ENCODE measurements at regions of chr10 and their contacts with region 1.

Region 1: GRCh38 chr10:79068562-79069324 is at the start of gene ZMIZ1:
- DNase-seq: peak; percentile 88
- ATAC-seq: peak; percentile 7
- H3K4me3 ChIP-seq: peak within 1 kb of the TSS; percentile 93 to 98 (median 93)
- H3K27ac ChIP-seq: peak within 1 kb of the TSS; percentile 91
- H3K4me1 ChIP-seq: peaks cover 56% of the 10 kb centered on the region
- H3K27me3 ChIP-seq: no peaks in the 10 kb centered on the region; a peak in 1 of 5 replicates
- CTCF ChIP-seq: no peak
- EP300 ChIP-seq: peak in 1 of 2 experiments; percentile 63; a peak in 2 of 4 replicates
- POLR2A ChIP-seq: peak in 1 of 2 experiments; percentile 71; a peak in 2 of 4 replicates
- RAD21 ChIP-seq: peak; percentile 67
- total RNA-seq, gene ZMIZ1: 5.3 and 11.0 TPM in 2 replicates

Region 2: GRCh38 chr10:78657163-78657861 is 411.4 kb before region 1 on chr10:
- CTCF ChIA-PET with region 1: no interaction called
- POLR2A ChIA-PET with region 1: no interaction called
- in situ Hi-C with region 1: no loop called
- intact Hi-C with region 1: loop called (anchors 5 kb)
- DNase-seq: peak; percentile 79
- ATAC-seq: peak; percentile 97
- H3K4me3 ChIP-seq: peak overlapping the region; percentile 26 to 65 (median 38)
- H3K27ac ChIP-seq: peak overlapping the region; percentile 80
- H3K4me1 ChIP-seq: peaks cover 35% of the 10 kb centered on the region
- H3K27me3 ChIP-seq: no peaks in the 10 kb centered on the region
- CTCF ChIP-seq: peak; percentile 92
- EP300 ChIP-seq: no peak
- POLR2A ChIP-seq: no peak
- RAD21 ChIP-seq: peak; percentile 90

Region 3: DNA sequence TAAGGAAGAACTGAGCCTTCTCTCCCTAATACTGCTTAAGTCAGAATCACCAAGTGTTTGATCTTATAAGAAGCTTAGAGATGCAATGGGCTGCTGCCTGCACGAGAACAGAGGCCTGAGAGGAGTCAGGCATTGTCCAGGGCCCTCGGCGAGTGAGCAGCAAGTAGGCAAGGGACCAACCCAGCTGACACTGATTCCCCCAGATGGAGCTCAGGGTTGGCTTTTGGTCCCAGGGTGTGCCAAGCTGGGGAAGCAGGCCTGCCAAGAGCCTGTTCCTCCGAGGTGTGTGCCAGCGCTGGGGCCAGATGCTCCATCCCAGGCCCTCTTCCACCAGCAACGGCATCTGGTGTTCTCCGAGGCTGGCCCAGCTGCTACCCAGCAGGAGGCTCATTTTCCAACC is 222.0 kb before region 1 on chr10:
- CTCF ChIA-PET with region 1: no interaction called
- POLR2A ChIA-PET with region 1: no interaction called
- in situ Hi-C with region 1: no loop called
- intact Hi-C with region 1: no loop called
- DNase-seq: no peak
- ATAC-seq: no peak
- H3K4me3 ChIP-seq: no peak overlapping the region
- H3K27ac ChIP-seq: no peak overlapping the region
- H3K4me1 ChIP-seq: no peaks in the 10 kb centered on the region
- H3K27me3 ChIP-seq: peaks cover under 1 to 36% of the 10 kb centered on the region in 2 experiments; a peak in 4 of 5 replicates
- CTCF ChIP-seq: no peak
- EP300 ChIP-seq: no peak
- POLR2A ChIP-seq: no peak
- RAD21 ChIP-seq: no peak

Region 4: DNA sequence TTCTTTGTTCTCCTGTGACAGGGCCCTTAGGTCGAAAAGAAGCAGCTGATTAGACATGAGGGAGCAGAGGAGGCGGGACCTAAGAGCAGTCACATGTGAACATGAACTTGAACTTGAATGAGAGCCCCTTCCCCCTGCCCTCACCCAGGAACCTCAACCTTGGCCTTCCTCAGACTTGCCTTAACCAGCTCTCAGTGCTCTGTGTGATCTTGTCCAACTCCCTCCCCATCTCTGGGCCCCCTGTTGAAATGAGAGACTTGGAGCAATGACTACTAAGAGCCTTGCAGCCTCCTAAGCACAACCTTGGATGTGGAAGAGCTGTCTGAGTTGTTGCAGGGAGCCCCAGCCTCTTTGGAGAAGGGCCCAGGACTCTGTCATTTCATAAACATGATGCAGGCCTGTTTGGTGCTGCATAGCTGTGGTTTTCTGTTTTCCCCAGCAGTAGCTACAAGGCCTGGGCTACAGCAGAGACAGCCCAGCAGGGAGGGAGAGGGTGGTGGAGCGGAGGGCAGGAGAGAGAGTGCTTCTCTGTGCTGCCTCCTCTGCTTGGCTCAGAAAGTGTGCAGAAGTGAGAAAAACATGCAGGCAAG is 123.9 kb before region 1 on chr10:
- CTCF ChIA-PET with region 1: no interaction called
- POLR2A ChIA-PET with region 1: no interaction called
- in situ Hi-C with region 1: no loop called
- intact Hi-C with region 1: no loop called
- DNase-seq: no peak
- ATAC-seq: peak; percentile 52
- H3K4me3 ChIP-seq: no peak overlapping the region
- H3K27ac ChIP-seq: no peak overlapping the region
- H3K4me1 ChIP-seq: peaks cover 35% of the 10 kb centered on the region
- H3K27me3 ChIP-seq: no peaks in the 10 kb centered on the region
- CTCF ChIP-seq: no peak
- EP300 ChIP-seq: no peak
- POLR2A ChIP-seq: no peak
- RAD21 ChIP-seq: no peak

Region 5: DNA sequence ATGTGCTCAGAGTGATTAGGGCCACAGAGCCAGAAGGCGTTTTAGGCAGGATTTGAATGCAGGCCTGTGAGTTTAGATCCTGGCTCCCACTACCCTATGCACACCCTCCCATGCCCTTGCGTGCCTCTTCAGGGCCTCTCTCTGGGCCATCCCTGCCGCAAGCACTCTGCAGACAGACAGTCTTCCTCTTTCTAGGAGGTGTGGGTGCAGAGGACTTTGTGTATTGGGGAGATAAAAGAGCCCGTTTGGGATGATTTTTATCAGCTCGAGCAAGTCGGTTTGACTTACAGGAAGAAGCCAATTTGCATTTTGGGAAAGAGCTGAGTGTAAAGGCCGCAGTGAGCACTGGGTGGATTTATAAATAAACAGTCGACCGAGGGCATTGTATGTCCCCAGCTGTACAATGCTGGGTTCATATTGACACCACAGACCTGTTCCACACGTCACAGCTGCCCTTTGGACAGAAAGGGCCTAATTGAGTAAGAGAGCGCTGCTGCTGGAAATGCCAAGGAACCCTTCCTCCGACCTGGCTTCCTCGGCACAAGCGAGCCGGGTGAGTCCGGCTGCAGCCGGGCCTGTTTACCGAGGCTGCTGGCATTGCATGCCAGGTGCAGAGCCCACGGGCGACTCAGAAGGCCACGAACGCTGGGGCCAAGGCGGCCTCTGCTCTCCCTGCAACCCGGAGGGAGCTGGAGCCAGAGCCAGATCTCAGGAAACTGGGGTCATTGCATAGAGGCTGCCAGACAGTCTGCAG is 25.1 kb after region 1 on chr10:
- CTCF ChIA-PET with region 1: no interaction called
- POLR2A ChIA-PET with region 1: interaction called, 8 read pairs
- in situ Hi-C with region 1: no loop called
- intact Hi-C with region 1: loop called (anchors 2 kb)
- DNase-seq: peak; percentile 97
- ATAC-seq: peak; percentile 95
- H3K4me3 ChIP-seq: peak overlapping the region; percentile 11 to 60 (median 23); a peak in 4 of 6 replicates
- H3K27ac ChIP-seq: peak overlapping the region; percentile 91
- H3K4me1 ChIP-seq: peaks cover 94% of the 10 kb centered on the region
- H3K27me3 ChIP-seq: no peaks in the 10 kb centered on the region
- CTCF ChIP-seq: no peak
- EP300 ChIP-seq: peak; percentile 71 to 82; a peak in 3 of 4 replicates
- POLR2A ChIP-seq: peak in 1 of 2 experiments; percentile 46; a peak in 2 of 4 replicates
- RAD21 ChIP-seq: no peak; the same call in 1 of the 2 replicates

Region 6: GRCh38 chr10:79127151-79127961 is 58.6 kb after region 1 on chr10:
- CTCF ChIA-PET with region 1: no interaction called
- POLR2A ChIA-PET with region 1: no interaction called
- in situ Hi-C with region 1: no loop called
- intact Hi-C with region 1: loop called (anchors 2 kb)
- DNase-seq: peak; percentile 92
- ATAC-seq: peak; percentile 95
- H3K4me3 ChIP-seq: no peak overlapping the region
- H3K27ac ChIP-seq: peak overlapping the region; percentile 51
- H3K4me1 ChIP-seq: peaks cover 73% of the 10 kb centered on the region
- H3K27me3 ChIP-seq: no peaks in the 10 kb centered on the region
- CTCF ChIP-seq: peak; percentile 63
- EP300 ChIP-seq: peak in 1 of 2 experiments; percentile 71; a peak in 2 of 4 replicates
- POLR2A ChIP-seq: no peak
- RAD21 ChIP-seq: peak; percentile 72

Region 7: GRCh38 chr10:79184145-79184625 is 115.4 kb after region 1 on chr10:
- CTCF ChIA-PET with region 1: no interaction called
- POLR2A ChIA-PET with region 1: interaction called, 4 read pairs
- in situ Hi-C with region 1: no loop called
- intact Hi-C with region 1: loop called (anchors 2 kb)
- DNase-seq: peak; percentile 77
- ATAC-seq: peak; percentile 44
- H3K4me3 ChIP-seq: peak overlapping the region in 1 of 3 experiments; percentile 50; a peak in 2 of 6 replicates
- H3K27ac ChIP-seq: peak overlapping the region; percentile 93
- H3K4me1 ChIP-seq: peaks cover 100% of the 10 kb centered on the region
- H3K27me3 ChIP-seq: no peaks in the 10 kb centered on the region
- CTCF ChIP-seq: no peak
- EP300 ChIP-seq: peak; percentile 28 to 78; a peak in 2 of 4 replicates
- POLR2A ChIP-seq: peak; percentile 34 to 52; a peak in 2 of 4 replicates
- RAD21 ChIP-seq: 0 out of 2 replicates have a peak, but pooled peaks have one; percentile 10